AG04449 (cell line): ENCODE measurements at regions of chr3 and their contacts with region 1.

Region 1: DNA sequence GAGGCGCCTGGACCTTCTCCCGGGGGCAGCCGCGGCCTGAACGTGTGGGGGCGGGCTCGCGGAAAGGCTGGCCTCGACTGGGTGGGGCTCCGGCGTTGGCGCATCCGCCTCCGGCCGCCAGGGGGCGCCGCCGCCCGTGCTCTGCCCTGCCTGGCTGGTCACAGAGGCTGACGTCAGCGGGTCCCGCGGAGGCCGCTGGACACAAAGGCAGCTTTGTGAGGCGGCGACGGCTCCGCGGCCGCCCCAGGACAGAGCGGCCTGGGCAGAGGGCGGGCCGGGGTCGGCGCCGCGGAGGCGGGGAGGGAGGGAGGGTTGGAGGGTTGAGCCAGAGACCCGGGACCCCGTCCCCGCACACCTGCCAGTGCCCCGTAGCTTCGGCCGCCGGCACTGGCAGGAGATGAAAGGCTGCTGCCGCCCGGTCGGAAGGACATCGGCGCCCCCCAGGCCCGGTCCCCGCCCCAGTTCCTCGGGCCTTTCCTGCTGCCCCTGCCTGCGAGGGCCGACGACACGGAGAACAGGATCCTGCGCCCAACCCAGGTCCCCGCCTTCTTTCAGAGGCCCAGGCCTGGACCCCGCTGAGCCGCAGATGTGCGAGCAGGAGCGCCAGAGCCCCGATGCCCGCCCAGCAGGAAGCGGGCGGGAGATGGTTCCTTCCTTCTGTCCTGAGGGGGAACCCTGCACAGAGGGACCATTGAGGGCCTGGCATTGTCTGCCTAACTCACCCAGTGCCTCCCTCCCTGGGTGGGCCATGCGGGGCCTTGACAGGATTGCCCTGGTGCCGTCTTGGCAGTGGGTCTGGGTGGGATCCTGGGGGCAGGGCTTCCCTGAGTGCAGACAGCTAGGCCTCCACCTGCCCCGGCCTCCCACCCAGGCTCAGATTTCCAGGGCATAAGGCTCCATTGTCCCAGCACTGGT is 8.7 kb upstream of the SEMA3B start:
- DNase-seq: no peak
- H3K4me3 ChIP-seq: peak overlapping the region; percentile 57
- CTCF ChIP-seq: peak; percentile 94

Region 2: GRCh38 chr3:50227390-50228183 is 32.7 kb before region 1 on chr3:
- CTCF ChIA-PET with region 1: interaction called, 1,609 read pairs
- POLR2A ChIA-PET with region 1: interaction called, 3 read pairs
- DNase-seq: no peak
- H3K4me3 ChIP-seq: peak overlapping the region; percentile 80
- CTCF ChIP-seq: peak; percentile 78

Region 3: GRCh38 chr3:50327943-50328691 is 67.8 kb after region 1 on chr3 and contains the start of gene TUSC2:
- CTCF ChIA-PET with region 1: interaction called, 14 read pairs
- POLR2A ChIA-PET with region 1: interaction called, 3 read pairs
- DNase-seq: peak; percentile 64
- H3K4me3 ChIP-seq: peak within 1 kb of the TSS; percentile 83
- CTCF ChIP-seq: no peak